ENCODE measurements at regions of chr10 and their contacts with region 1.

Region 1: GRCh38 chr10:7525314-7526016 is 114.6 kb upstream of the SFMBT2 start:
- DNase-seq: peak in 1 of 2 donors; percentile 29
- ATAC-seq: peak; percentile 70 to 81
- H3K4me3 ChIP-seq: no peak overlapping the region
- H3K27ac ChIP-seq: no peak overlapping the region
- H3K4me1 ChIP-seq: no peaks in the 10 kb centered on the region
- H3K27me3 ChIP-seq: peaks cover 6 to 8% (median 7%) of the 10 kb centered on the region in 3 donors
- CTCF ChIP-seq: peak; percentile 59 to 75 (median 65)
- POLR2A ChIP-seq: no peak

Region 2: DNA sequence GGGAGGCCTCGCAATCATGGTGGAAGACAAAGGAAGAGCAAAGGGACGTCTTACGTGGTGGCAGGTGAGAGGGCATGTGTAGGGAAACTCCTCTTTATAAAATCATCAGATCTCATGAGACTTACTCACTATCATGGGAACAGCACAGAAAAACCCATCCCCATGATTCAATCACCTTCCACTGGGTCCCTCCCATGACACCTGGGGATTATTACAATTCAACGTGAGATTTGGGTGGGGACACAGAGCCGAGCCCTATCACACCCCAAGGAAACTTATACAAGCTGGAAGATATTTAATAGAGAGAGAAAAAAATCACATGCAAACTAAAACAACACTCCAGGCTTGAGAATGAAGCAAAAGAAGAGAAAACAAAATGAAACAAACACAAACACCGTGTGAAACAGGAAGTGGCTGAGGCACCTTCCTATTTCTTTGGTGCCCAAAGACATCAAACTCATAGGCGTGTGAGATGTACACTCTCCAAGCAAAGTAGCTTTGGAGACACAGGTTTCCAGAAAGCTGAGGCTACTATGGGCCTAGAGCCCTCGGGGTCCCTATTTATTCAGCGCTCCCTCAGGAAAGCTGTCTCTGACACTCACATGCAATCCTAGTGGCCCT is 1042.6 kb before region 1 on chr10:
- in situ Hi-C with region 1: no loop called
- intact Hi-C with region 1: no loop called
- DNase-seq: no peak
- ATAC-seq: no peak
- H3K4me3 ChIP-seq: no peak overlapping the region
- H3K27ac ChIP-seq: peak overlapping the region in 1 of 4 donors; percentile 34
- H3K4me1 ChIP-seq: no peaks in the 10 kb centered on the region
- H3K27me3 ChIP-seq: no peaks in the 10 kb centered on the region
- CTCF ChIP-seq: no peak
- POLR2A ChIP-seq: no peak

Region 3: DNA sequence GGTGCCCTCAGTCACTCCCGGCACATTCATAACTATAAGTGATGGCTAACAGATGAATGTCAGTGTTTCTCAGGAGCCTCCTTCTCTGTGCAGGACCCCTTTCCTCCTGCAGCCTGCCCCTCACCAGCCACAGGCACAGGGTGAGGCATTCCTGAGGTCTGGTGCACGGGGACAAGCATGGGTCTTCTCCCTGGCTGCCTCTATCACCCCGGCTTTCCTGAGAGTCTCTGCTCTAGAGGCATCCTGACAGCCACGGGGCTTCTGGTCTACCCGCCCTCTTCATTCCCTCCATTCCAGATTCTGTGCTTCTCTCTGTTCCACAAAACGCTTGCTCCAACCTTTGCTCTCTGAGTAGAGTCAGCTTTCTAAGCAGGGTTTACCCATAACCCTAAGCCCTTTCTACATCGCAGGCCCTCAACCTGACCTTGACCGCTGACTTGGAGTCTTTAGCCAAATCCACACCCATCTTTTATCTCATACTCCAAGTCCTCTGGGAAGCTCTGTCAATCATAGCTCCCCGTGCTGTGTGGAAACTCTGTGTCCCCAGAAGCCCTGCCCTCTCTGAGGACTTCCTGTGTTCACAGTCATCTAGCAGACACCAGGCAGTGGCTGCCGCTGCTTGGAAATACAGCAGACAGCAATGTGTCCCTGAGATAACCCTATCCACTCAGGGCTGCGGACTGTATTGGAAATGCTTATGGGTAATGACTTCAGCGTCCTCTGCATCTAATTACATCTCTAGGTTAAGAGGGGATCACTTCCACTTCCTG is 273.6 kb before region 1 on chr10:
- in situ Hi-C with region 1: no loop called
- intact Hi-C with region 1: no loop called
- DNase-seq: no peak
- ATAC-seq: no peak
- H3K4me3 ChIP-seq: no peak overlapping the region
- H3K27ac ChIP-seq: no peak overlapping the region
- H3K4me1 ChIP-seq: no peaks in the 10 kb centered on the region
- H3K27me3 ChIP-seq: no peaks in the 10 kb centered on the region
- CTCF ChIP-seq: no peak
- POLR2A ChIP-seq: no peak

Region 4: GRCh38 chr10:7445474-7446185 is 79.8 kb before region 1 on chr10:
- in situ Hi-C with region 1: no loop called
- intact Hi-C with region 1: no loop called
- DNase-seq: no peak
- ATAC-seq: no peak
- H3K4me3 ChIP-seq: no peak overlapping the region
- H3K27ac ChIP-seq: no peak overlapping the region
- H3K4me1 ChIP-seq: no peaks in the 10 kb centered on the region
- H3K27me3 ChIP-seq: peaks cover 0 to 4% (median 0%) of the 10 kb centered on the region in 3 donors
- CTCF ChIP-seq: no peak
- POLR2A ChIP-seq: no peak

Region 5: GRCh38 chr10:7687228-7687907 is 161.9 kb after region 1 on chr10:
- in situ Hi-C with region 1: loop called (anchors 5 kb)
- intact Hi-C with region 1: loop called (anchors 1 kb)
- DNase-seq: peak; percentile 50 to 66
- ATAC-seq: peak; percentile 74 to 81
- H3K4me3 ChIP-seq: no peak overlapping the region
- H3K27ac ChIP-seq: no peak overlapping the region
- H3K4me1 ChIP-seq: no peaks in the 10 kb centered on the region
- H3K27me3 ChIP-seq: no peaks in the 10 kb centered on the region
- CTCF ChIP-seq: peak; percentile 59 to 77 (median 74)
- POLR2A ChIP-seq: no peak

Measured in gastrocnemius medialis (tissue), 4 donors.